Adrenal gland (tissue), 19 donors: ENCODE measurements at regions of chr7 and their contacts with region 1.

Region 1: DNA sequence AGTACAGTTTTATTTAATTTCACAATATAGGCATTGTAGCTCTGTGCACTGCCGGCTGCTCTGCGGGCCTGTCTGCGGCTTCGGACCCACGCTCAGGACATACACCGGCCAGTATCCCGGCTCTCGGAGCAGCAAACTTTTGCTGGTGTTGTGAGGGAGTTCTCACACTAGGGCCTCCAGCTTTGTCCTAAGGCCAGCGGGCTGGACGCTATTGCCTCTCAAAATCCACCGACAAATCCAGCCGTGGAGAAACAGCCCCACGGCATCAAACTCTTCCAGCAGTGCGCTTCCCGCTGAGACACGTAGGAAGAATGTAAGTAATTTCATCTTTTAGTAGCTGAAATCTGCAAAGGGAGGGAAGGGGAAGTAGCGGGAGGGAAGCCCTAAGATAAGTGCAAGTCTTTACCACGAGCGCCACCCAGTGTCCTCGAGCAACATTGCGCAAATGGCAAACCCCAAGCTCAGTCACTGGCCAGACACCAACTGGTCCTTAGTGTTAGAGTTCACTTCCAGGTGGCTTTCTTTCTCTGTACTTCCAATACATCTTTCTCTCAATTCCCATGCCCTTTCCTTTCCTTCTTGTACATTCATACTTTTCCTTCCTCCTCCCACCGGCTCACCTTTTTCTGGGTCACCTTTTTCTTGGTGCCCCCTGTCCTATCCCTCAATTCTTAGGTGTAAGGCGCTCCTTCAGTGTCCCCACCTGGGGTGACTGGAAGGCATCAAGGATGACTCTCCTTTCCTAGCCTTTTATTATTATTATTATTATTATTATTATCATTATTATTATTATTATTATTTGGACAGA is 3.0 kb upstream of the DLX5 start:
- DNase-seq: peak; percentile 74 to 91 (median 82)
- H3K4me3 ChIP-seq: peak overlapping the region in 1 of 4 donors; percentile 55
- H3K27ac ChIP-seq: no peak overlapping the region
- H3K4me1 ChIP-seq: peaks cover 10 to 19% of the 10 kb centered on the region in 2 donors
- H3K27me3 ChIP-seq: peaks cover 41% of the 10 kb centered on the region
- CTCF ChIP-seq: peak; percentile 73 to 92 (median 88)
- POLR2A ChIP-seq: no peak

Region 2: DNA sequence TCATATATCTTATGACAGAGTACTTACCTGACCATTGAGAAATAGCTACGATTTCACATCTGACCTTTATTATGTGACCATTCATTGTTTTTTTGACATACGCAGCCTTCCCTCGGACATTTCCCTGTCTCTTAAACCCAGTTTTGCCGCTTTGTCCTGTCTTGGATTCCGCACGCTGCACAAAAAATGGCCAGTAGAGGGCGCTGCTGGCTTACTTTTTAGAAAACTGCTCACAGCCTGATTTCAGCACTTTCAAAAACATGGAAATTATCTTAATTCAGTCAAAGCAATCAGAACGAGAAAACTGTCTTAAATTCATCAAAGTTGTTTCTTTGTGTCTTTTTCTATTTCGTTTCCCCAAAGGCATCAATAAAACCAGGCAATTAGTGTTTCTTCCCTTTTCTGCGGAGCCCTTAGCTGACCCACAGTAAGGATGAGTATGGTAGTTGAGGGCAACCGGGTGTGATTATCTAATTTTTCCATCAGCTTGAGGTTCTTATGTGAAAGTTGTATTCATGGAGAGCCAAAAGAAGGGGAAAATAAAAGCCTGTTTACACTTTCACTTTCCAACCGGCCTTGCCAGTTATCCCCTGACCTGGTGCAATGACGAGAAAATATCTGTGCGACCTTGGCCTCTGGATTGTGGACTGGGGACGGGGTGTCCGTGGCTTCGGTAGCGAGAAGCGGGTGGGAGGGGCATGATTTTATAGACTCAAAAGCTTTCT is 1110.9 kb before region 1 on chr7:
- intact Hi-C with region 1: loop called (anchors 10 kb)
- DNase-seq: peak; percentile 71 to 95 (median 87)
- H3K4me3 ChIP-seq: peak overlapping the region in 3 of 4 donors; percentile 0 to 45 (median 42)
- H3K27ac ChIP-seq: no peak overlapping the region
- H3K4me1 ChIP-seq: peaks cover 0 to 6% of the 10 kb centered on the region in 2 donors
- H3K27me3 ChIP-seq: no peaks in the 10 kb centered on the region
- CTCF ChIP-seq: peak; percentile 82 to 98 (median 88)
- POLR2A ChIP-seq: no peak

Region 3: DNA sequence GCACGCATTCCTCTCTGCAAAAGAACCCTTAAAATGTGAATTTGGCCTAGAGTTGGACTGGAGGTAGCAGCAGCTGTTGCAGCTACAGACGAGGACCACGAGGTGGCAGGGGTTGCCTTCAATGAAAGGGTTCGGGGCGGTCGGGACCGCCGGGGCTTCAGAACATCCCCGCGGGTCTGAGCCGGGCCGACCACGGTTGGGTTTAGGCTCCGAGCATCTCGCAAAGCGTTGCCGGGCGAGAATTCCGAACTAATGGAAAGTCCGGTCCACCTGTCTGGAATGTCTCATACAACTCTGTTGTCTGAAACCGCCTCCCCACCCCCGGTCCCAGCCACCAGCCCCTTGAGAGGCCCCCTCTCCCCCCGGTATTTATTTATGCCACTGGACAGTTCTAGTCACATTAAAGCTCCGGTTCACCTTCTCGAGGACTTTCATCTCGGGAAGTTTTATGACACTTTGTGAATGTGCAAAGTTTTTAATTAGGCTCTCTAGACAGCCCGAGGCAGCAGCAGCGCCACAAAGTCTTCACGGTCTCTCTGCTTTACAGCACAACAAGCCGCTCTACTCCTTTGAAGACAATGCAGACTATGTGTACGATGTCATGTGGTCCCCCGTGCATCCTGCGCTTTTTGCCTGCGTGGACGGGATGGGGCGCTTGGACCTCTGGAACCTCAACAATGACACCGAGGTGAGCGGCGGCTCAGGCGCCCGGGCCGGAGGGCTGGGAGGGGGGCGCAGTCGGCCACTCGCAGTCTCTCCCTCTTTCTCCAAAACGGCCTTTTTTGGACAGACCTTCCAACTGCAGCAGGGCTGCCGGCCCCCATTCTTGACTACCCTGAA is 951.9 kb before region 1 on chr7:
- intact Hi-C with region 1: loop called (anchors 5 to 10 kb)
- DNase-seq: peak; percentile 49 to 74 (median 66)
- H3K4me3 ChIP-seq: peak overlapping the region in 2 of 4 donors; percentile 24 to 57
- H3K27ac ChIP-seq: no peak overlapping the region
- H3K4me1 ChIP-seq: peaks cover 6% of the 10 kb centered on the region in 2 donors
- H3K27me3 ChIP-seq: peaks cover 8% of the 10 kb centered on the region
- CTCF ChIP-seq: peak; percentile 49 to 83 (median 72)
- POLR2A ChIP-seq: no peak

Region 4: GRCh38 chr7:96414931-96415292 is 612.7 kb before region 1 on chr7:
- intact Hi-C with region 1: loop called in 1 of 2 experiments (anchors 10 kb)
- DNase-seq: peak; percentile 34 to 77 (median 50)
- H3K4me3 ChIP-seq: no peak overlapping the region
- H3K27ac ChIP-seq: no peak overlapping the region
- H3K4me1 ChIP-seq: no peaks in the 10 kb centered on the region
- H3K27me3 ChIP-seq: no peaks in the 10 kb centered on the region
- CTCF ChIP-seq: peak; percentile 48 to 75 (median 73)
- POLR2A ChIP-seq: no peak

Region 5: GRCh38 chr7:97215556-97215955 is 187.9 kb after region 1 on chr7:
- intact Hi-C with region 1: no loop called
- DNase-seq: peak in 1 of 7 donors; percentile 1
- H3K4me3 ChIP-seq: no peak overlapping the region
- H3K27ac ChIP-seq: no peak overlapping the region
- H3K4me1 ChIP-seq: no peaks in the 10 kb centered on the region
- H3K27me3 ChIP-seq: no peaks in the 10 kb centered on the region
- CTCF ChIP-seq: no peak
- POLR2A ChIP-seq: no peak